ENCODE measurements at regions of chr14 and their contacts with region 1.

Region 1: DNA sequence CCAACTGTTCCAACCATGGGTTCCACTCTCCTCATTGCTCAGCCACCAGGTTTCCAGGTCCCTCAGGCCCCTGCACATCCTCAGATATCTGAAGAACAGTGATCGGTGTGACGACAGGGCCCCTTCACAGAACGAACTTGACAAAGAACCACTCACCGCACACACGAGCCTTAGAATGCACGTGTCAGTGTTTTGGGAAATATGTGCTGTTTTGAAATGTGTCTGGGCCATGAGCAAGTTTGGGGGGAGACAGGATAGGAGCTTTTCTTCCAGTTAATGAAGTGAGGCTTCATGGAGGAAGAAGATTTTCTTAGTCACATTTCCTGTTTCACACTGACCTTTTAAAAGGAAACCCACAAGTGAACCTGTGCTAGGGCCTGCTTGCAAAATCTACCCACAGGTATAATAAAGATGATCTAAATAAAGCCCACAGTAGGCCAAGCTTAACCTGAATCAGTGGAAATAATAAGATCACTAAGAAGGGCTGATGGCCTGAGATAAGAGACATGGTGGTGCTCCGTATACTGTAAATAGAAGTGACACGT is 58.6 kb downstream of the ZFP36L1 start:
- DNase-seq: peak; percentile 70
- H3K4me3 Mint-ChIP-seq: peak overlapping the region; percentile 58
- H3K27ac Mint-ChIP-seq: peak overlapping the region; percentile 80
- H3K4me1 Mint-ChIP-seq: peaks cover 54% of the 10 kb centered on the region
- H3K27me3 Mint-ChIP-seq: no peaks in the 10 kb centered on the region

Region 2: DNA sequence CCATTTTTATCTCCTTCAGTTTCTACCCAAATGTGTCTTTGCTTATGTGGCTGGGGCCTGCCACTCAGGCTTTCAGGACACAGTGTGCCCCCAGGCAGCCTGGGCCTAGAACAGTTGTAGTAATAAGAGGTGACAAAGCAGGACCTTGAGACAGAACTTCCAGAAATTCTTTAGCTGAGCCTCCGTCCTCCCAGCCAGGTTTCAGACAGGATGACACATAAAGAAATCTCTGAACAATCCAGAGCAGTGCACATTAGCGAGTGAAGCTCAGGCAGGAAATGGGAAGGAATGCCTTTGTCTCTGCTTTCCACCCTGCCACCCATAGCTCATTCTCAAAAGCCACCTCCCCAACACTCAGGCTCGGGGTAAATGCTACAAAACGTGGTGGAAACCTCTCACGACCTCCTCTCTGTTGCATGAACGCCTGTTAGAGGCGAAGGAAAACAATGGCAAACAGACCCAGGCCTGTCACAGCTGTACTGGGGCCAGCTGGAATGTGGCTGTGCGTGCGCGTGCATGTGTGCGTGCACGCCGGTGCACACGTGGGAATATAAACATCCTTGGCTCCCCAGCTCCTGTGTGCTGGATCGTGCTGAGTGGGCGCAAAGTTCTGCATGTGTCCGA is 228.2 kb before region 1 on chr14:
- intact Hi-C with region 1: no loop called
- DNase-seq: no peak
- H3K4me3 Mint-ChIP-seq: peak overlapping the region; percentile 31
- H3K27ac Mint-ChIP-seq: peak overlapping the region; percentile 65
- H3K4me1 Mint-ChIP-seq: peaks cover 24% of the 10 kb centered on the region
- H3K27me3 Mint-ChIP-seq: no peaks in the 10 kb centered on the region

Region 3: GRCh38 chr14:68685419-68686204 is 48.7 kb before region 1 on chr14:
- intact Hi-C with region 1: loop called (anchors 1 kb)
- DNase-seq: peak; percentile 92
- H3K4me3 Mint-ChIP-seq: peak overlapping the region; percentile 61
- H3K27ac Mint-ChIP-seq: peak overlapping the region; percentile 91
- H3K4me1 Mint-ChIP-seq: peaks cover 56% of the 10 kb centered on the region
- H3K27me3 Mint-ChIP-seq: no peaks in the 10 kb centered on the region

Region 4: DNA sequence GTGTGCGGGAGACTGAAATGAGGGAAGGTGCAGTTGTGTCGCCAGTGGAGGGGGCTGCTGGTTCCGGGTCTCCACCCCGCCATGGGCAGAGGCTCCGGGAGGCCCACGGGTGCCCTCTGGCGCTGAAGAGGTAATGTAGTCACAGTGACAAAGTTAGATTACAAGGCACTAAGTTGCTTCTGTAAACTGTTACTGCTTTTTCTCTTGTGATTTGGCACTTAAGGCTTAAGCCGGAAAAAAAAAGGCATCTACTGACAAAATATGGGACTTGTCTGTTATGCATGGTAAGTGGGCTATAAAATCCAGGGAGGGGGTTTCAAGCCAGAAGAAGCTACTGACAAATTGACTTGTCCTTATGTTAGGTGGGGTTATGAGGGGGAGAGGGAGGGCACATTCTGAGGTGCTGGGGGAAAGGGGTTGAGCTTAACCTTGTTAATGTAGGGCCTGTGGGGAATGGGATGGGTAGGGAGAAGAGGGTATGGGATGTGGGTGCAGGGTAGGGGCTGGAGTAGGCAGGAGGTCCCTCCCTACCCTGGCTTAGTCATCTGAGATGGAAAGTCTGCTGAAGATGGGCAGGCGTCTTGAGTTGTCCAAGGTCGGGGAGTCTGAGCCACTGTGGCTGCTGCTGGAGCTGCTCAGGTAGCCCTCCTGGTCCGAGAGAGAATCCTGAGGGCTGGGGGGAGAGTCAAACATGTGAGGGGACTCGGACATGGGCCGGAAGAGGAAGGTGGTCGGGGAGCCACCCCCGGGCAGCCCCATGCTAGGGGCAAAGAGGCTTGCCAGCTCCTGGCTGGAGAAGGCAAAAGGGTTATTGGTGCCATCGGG is 54.9 kb after region 1 on chr14:
- intact Hi-C with region 1: loop called (anchors 2 kb)
- DNase-seq: peak; percentile 95
- H3K4me3 Mint-ChIP-seq: peak overlapping the region; percentile 93
- H3K27ac Mint-ChIP-seq: peak overlapping the region; percentile 100
- H3K4me1 Mint-ChIP-seq: peaks cover 68% of the 10 kb centered on the region
- H3K27me3 Mint-ChIP-seq: no peaks in the 10 kb centered on the region